Prostate gland (tissue), 2 donors: ENCODE measurements at regions of chr10 and their contacts with region 1.

Region 1: DNA sequence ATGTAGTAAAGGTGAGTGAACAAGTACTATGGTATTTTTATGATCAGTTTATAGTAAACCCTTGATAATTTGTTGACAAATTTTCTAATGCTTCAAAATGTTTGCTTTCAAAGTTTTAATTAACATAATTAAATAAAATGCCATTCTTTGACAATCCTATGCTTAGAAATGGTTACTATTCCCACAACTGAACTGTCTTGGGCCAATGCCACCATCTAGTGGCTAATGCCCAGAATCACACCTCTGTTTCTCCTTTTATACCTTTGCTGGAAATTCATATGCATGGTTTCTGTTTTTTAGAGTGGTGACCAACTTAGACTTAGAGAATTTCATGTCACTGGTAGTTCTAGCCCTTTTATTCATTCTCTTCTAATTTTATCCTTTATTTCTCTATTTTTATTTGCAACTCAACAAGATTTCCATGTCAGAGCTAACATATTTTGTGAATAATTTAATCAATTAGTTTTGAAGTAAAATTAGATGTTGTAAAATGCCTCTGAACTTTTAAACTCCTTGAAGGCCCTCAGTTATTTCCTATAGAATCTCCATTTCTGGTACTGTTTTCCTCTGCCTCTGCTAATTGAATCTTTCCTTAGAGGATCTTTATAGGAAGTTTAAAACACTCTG is 31.1 kb downstream of the PCGF5 start:
- DNase-seq: peak; percentile 45
- H3K4me3 ChIP-seq: no peak overlapping the region
- H3K27ac ChIP-seq: no peak overlapping the region
- H3K4me1 ChIP-seq: no peaks in the 10 kb centered on the region
- H3K27me3 ChIP-seq: no peaks in the 10 kb centered on the region
- CTCF ChIP-seq: peak; percentile 74 to 91 (median 86)
- POLR2A ChIP-seq: no peak

Region 2: GRCh38 chr10:90560331-90560730 is 691.2 kb before region 1 on chr10:
- intact Hi-C with region 1: no loop called
- DNase-seq: no peak
- H3K4me3 ChIP-seq: no peak overlapping the region
- H3K27ac ChIP-seq: no peak overlapping the region
- H3K4me1 ChIP-seq: no peaks in the 10 kb centered on the region
- H3K27me3 ChIP-seq: no peaks in the 10 kb centered on the region
- CTCF ChIP-seq: no peak
- POLR2A ChIP-seq: no peak

Region 3: GRCh38 chr10:90912174-90912573 is 339.4 kb before region 1 on chr10:
- intact Hi-C with region 1: loop called (anchors 2 kb)
- DNase-seq: peak; percentile 22
- H3K4me3 ChIP-seq: no peak overlapping the region
- H3K27ac ChIP-seq: peak overlapping the region in 1 of 2 donors; percentile 37
- H3K4me1 ChIP-seq: peaks cover under 1% of the 10 kb centered on the region
- H3K27me3 ChIP-seq: no peaks in the 10 kb centered on the region
- CTCF ChIP-seq: no peak
- POLR2A ChIP-seq: no peak

Region 4: DNA sequence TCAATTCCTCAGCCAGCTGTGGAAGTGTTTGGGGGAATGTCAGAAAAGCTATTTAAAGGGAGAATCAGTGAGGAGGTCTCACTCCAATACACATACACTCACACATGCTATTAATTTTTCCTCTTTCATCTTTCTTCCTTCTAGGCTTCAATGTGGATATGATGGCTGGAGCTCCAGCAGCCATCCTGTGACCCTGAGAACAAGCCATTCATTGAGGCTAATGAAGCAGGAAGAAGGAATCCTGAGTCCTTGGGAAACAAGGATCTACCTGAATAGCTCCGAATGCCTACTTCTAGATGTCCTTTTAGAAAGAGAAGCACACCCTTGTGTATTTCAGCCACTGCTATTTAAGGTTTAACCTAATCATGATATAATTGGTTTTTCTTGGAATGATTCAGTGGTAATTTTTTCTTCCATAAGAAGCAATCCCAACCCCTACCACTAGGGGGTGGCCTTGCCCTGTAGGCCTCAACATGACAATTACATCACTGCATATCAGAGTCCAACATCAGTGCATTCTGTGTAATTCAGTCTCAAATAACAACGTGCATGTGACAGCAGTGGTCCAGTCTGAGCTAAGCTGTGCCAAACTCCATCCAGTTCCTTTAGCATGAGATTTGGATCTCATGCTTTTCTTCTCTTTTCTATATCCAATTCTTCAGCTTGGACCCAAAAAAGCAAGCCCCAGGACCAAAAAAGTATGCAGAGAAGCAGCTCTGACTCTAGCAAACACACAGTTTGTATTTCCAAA is 245.4 kb before region 1 on chr10:
- intact Hi-C with region 1: loop called (anchors 2 kb)
- DNase-seq: peak; percentile 53
- H3K4me3 ChIP-seq: no peak overlapping the region
- H3K27ac ChIP-seq: no peak overlapping the region
- H3K4me1 ChIP-seq: no peaks in the 10 kb centered on the region
- H3K27me3 ChIP-seq: peaks cover 2% of the 10 kb centered on the region
- CTCF ChIP-seq: peak; percentile 86 to 94 (median 90)
- POLR2A ChIP-seq: no peak

Region 5: DNA sequence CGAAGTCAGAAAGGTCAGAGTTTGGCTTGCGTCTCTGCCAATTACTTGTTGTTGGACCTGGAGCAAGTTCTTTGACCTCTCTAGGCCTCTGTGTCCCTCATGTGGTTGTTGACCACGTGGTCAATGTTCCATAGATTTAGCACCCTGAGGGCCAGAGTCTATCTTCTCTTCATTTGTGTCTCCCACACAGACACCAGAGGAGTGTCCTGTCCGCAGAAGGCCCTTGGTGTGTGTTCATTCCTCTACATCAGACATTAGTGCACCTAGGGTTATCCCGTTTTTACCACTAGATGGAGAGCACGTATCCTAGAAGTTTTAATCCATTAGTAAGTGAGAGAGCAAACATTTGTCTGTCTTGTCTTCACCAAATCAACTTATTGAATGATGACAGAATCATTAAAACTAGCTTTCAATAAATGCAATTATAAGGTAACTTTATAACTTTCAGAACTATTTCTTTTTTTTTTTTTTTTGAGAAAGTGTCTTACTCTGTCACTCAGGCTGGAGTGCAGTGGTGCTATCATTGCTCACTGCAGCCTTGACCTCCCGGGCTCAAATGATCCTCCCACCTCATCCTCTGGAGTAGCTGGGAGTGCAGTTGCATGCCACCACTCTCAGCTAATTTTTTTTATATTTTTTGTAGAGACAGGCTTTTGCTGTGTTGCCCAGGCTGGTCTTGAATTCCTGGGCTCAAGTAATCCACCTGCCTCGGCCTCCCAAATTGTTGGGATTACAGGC is 208.2 kb before region 1 on chr10:
- intact Hi-C with region 1: loop called (anchors 5 kb)
- DNase-seq: no peak
- H3K4me3 ChIP-seq: no peak overlapping the region
- H3K27ac ChIP-seq: no peak overlapping the region
- H3K4me1 ChIP-seq: no peaks in the 10 kb centered on the region
- H3K27me3 ChIP-seq: no peaks in the 10 kb centered on the region
- CTCF ChIP-seq: peak in 3 of 4 experiments; percentile 21 to 38 (median 37)
- POLR2A ChIP-seq: no peak

Region 6: GRCh38 chr10:91054333-91054732 is 197.2 kb before region 1 on chr10:
- intact Hi-C with region 1: no loop called
- DNase-seq: no peak
- H3K4me3 ChIP-seq: no peak overlapping the region
- H3K27ac ChIP-seq: no peak overlapping the region
- H3K4me1 ChIP-seq: no peaks in the 10 kb centered on the region
- H3K27me3 ChIP-seq: no peaks in the 10 kb centered on the region
- CTCF ChIP-seq: no peak
- POLR2A ChIP-seq: no peak

Region 7: GRCh38 chr10:91088300-91089140 is 163.0 kb before region 1 on chr10:
- intact Hi-C with region 1: loop called (anchors 5 kb)
- DNase-seq: no peak
- H3K4me3 ChIP-seq: no peak overlapping the region
- H3K27ac ChIP-seq: no peak overlapping the region
- H3K4me1 ChIP-seq: no peaks in the 10 kb centered on the region
- H3K27me3 ChIP-seq: no peaks in the 10 kb centered on the region
- CTCF ChIP-seq: peak in 1 of 4 experiments; percentile 18
- POLR2A ChIP-seq: no peak

Region 8: DNA sequence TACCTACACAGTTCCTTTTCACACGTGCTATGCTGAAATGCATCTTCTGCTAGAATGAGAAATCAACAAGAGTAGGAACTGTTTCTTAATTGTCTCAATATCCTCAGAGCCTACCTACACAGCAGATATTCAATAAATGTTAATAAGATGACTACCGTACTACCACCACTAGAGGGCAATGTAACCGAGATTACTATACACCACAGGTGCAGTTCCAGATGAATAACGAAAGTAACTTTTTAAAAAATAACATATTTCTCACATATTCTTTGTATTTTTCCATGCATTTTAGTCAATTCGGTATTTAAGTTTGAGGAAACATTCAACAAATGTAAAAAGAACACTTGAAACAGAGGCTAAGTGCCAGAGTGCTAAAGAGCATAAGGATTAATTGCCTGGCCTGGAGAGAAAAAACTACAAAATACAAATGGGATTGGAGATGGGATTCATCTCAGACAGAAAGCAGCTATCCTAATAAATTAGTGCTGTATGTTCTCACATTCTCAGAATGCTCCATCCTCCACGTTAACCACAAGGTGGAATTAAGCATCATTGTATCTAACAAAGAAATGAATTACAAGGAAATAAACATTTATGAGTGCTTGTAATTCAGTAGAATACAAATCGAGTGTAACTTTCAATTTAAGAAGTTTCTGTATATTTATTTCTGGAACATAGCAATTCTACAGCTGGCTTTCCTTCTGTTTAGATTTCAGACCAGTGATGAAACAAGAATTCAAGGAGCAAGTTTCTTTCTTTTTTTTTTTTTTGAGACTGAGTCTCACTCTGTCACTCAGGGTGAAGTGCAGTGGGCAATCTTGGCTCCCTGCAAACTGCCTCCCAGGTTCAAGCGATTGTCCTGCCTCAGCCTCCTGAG is 138.3 kb after region 1 on chr10:
- intact Hi-C with region 1: no loop called
- DNase-seq: peak; percentile 36
- H3K4me3 ChIP-seq: no peak overlapping the region
- H3K27ac ChIP-seq: no peak overlapping the region
- H3K4me1 ChIP-seq: peaks cover 2% of the 10 kb centered on the region
- H3K27me3 ChIP-seq: no peaks in the 10 kb centered on the region
- CTCF ChIP-seq: peak; percentile 67 to 82 (median 74)
- POLR2A ChIP-seq: no peak